Common myeloid progenitor, CD34-positive (primary cell): ENCODE measurements at regions of chr6 and their contacts with region 1.

Region 1: GRCh38 chr6:137673603-137674002 is 179.4 kb upstream of the OLIG3 start:
- DNase-seq: no peak
- H3K4me3 ChIP-seq: no peak overlapping the region
- H3K27ac ChIP-seq: no peak overlapping the region
- H3K4me1 ChIP-seq: peaks cover 0 to 8% (median 1%) of the 10 kb centered on the region in 4 experiments
- H3K27me3 ChIP-seq: no peaks in the 10 kb centered on the region

Region 2: GRCh38 chr6:137661601-137662000 is 12.0 kb before region 1 on chr6:
- CTCF ChIA-PET with region 1: interaction called, 12 read pairs
- POLR2A ChIA-PET with region 1: no interaction called
- DNase-seq: peak; percentile 29 to 54 (median 50)
- H3K4me3 ChIP-seq: no peak overlapping the region
- H3K27ac ChIP-seq: no peak overlapping the region
- H3K4me1 ChIP-seq: no peaks in the 10 kb centered on the region
- H3K27me3 ChIP-seq: peaks cover 0 to 8% (median 0%) of the 10 kb centered on the region in 5 experiments